Ovary (tissue), 10 donors: ENCODE measurements at regions of chr13 and their contacts with region 1.

Region 1: DNA sequence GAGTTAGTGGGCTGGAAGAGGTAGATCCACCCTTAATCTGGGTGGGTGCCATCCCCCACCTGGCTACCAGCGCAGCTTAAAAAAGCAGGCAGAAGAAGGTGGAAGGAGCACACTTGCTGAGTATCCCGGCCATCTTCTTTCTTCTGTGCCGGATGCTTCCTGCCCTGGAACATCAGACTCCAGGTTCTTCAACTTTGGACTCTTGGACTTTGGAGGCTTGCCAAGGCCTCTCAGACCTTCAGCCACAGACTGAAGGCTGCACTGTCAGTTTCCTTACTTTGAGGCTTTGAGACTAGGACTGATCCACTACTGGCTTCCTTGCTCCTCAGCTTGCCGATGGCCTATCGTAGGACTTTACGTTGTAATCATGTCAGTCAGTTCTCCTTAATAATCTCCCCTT is 127.6 kb upstream of the GPC6 start:
- DNase-seq: peak in 1 of 5 donors; percentile 13
- H3K4me3 ChIP-seq: no peak overlapping the region
- H3K27ac ChIP-seq: no peak overlapping the region
- H3K4me1 ChIP-seq: no peaks in the 10 kb centered on the region
- H3K27me3 ChIP-seq: no peaks in the 10 kb centered on the region
- CTCF ChIP-seq: no peak
- EP300 ChIP-seq: no peak
- POLR2A ChIP-seq: no peak

Region 2: GRCh38 chr13:91684746-91685145 is 1414.2 kb before region 1 on chr13:
- intact Hi-C with region 1: no loop called
- DNase-seq: no peak
- H3K4me3 ChIP-seq: no peak overlapping the region
- H3K27ac ChIP-seq: no peak overlapping the region
- H3K4me1 ChIP-seq: no peaks in the 10 kb centered on the region
- H3K27me3 ChIP-seq: no peaks in the 10 kb centered on the region
- CTCF ChIP-seq: no peak
- EP300 ChIP-seq: no peak
- POLR2A ChIP-seq: no peak

Region 3: DNA sequence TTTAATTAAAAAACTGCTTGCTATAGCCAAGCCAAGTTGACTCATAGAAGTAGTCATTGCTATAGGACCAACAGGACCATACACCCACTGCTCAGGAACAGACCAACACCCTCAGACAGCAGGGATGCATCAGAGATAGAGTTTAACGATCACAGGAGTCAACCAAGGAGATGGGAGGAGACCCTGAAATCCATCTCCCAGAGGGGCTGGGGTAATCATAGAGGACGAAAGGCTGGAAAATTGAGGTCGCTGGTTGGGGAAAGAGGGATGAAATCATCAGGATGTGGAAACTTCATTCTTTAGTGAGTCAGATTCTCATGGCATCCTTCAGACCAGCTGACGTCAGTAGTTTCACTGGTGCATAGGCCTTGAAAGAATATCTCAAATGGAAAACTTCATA is 32.8 kb before region 1 on chr13:
- intact Hi-C with region 1: loop called in 1 of 4 experiments (anchors 2 kb)
- DNase-seq: no peak
- H3K4me3 ChIP-seq: no peak overlapping the region
- H3K27ac ChIP-seq: no peak overlapping the region
- H3K4me1 ChIP-seq: no peaks in the 10 kb centered on the region
- H3K27me3 ChIP-seq: no peaks in the 10 kb centered on the region
- CTCF ChIP-seq: no peak
- EP300 ChIP-seq: no peak
- POLR2A ChIP-seq: no peak